ENCODE measurements at regions of chr11 and their contacts with region 1.

Region 1: DNA sequence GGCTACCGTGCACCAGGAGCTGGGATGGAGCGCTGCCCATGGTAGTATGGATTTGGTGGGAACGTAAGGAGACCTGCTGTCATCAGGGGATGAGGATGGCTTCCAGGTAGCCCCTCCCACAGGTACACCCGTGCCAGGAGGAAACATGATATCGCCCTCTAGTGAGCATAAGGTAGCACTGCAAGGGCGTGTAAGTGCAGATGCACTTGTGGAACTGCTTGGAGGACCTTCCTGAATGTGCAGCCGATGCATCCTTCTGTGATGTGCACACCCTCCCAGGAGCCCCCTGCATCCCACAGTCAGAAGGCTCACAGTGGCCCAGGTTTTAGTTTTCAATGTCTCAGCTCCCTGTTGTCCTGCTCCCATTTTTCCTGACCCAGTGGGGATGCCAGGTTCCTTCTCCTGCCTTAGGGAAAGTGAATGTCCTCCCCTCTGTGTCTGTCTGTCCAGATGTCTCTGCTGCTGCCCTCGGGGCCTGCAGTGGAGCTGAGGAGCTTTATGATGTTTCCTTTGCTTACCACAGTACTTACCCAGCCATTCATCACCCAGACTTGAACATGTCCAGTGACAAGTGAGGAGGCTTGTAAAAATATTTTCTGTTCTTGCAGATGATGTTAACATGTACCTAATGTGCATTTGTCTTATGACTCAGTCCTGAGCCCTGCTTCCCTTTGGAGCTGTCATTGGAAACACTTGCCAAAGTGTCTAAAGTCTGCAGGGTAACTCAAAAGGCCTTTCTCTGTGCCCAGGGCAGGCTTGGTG is 49.2 kb downstream of the DBX1 start:
- DNase-seq: peak; percentile 75 to 91 (median 87)
- ATAC-seq: peak; percentile 84
- H3K4me3 ChIP-seq: no peak overlapping the region
- H3K27ac ChIP-seq: no peak overlapping the region
- H3K4me1 ChIP-seq: peaks cover 12 to 14% of the 10 kb centered on the region in 2 experiments
- H3K27me3 ChIP-seq: no peaks in the 10 kb centered on the region
- CTCF ChIP-seq: peak; percentile 91 to 95 (median 92)
- EP300 ChIP-seq: no peak
- POLR2A ChIP-seq: no peak
- RAD21 ChIP-seq: peak; percentile 82 to 96

Region 2: DNA sequence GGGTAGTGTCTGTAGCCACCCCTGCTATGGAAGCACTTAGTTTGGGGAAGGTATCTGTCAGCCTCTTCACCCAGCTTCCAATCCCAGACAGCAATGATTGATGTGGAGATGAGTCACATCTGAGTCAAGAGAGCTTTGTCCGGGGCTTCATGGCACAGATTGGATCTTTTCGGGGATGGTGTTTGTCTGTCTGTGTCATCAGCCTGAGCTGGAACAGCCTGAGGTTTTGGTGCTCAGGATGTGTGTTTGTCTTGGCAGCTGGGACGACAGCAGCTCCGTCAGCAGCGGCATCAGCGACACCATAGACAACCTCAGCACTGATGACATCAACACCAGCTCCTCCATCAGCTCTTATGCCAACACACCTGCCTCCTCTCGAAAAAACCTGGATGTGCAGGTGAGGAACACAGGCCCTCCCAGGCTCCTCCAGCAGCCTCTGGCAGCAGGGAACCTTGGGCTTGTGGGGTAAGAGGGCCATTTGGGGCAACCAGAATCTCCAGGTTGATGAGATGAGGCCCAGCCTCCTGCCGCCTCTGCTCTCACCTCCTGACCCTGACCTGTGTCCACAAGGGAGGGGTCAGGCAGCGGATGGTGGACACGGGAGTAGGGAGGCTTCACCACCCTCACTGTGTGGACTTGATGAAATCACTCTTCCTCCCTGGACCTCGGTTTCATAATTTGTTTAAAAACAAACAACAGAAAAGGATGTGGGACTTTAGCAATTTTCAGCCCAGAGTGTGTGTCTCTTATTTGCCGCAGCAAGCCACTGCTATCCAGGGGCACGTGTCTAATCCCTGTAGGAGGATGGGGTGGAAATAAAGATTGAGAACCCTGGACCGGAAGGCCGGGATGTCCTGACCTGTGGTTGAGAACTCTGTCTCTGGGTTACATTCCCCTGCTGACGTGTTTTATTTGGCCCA is 75.1 kb before region 1 on chr11:
- CTCF ChIA-PET with region 1: no interaction called
- POLR2A ChIA-PET with region 1: no interaction called
- in situ Hi-C with region 1: no loop called
- intact Hi-C with region 1: loop called (anchors 5 kb)
- DNase-seq: peak in 3 of 4 experiments; percentile 15 to 54 (median 40)
- ATAC-seq: peak; percentile 66
- H3K4me3 ChIP-seq: no peak overlapping the region
- H3K27ac ChIP-seq: no peak overlapping the region
- H3K4me1 ChIP-seq: no peaks in the 10 kb centered on the region; a peak in 1 of 5 replicates
- H3K27me3 ChIP-seq: peaks cover 13 to 55% of the 10 kb centered on the region in 2 experiments
- CTCF ChIP-seq: no peak
- EP300 ChIP-seq: peak; percentile 57
- POLR2A ChIP-seq: no peak
- RAD21 ChIP-seq: no peak

Region 3: DNA sequence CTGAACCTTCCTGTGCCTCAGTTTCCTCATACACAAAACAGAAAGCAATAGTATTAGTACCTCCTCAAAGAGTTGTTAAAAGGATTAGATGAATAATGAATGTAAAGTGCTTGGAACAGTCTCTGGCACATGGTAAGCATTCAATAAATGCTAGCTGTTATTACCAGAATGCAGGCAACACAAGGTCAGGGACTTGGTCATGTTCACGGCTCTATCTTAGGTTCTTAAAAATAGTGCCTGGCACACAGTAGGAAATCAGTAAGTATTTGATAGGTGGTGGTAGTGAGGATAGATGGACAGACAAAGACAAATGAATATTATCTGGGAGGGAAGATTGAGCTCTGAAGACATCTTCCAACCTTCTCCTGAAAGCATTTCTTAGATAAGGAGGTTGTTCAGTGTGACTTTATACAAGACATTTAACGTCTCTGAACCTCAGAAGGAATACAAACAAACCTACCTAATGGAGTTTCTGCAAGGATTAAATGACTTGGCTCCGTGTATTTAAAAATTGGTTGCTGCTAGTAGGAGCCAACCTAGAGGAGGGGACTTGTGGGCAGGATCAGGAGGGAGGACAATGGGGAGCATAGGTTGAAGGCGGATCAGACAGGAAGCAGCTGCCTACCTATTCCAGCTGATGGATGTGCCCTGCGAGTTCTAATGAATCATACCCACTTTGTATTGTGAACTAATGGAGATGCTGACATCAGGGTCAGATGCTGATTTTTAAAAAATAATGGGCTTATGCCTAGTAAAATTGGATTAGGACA is 44.9 kb before region 1 on chr11:
- CTCF ChIA-PET with region 1: no interaction called
- POLR2A ChIA-PET with region 1: no interaction called
- in situ Hi-C with region 1: no loop called
- intact Hi-C with region 1: loop called (anchors 5 kb)
- DNase-seq: no peak
- ATAC-seq: no peak
- H3K4me3 ChIP-seq: peak overlapping the region; percentile 40
- H3K27ac ChIP-seq: no peak overlapping the region
- H3K4me1 ChIP-seq: peaks cover 0 to 12% of the 10 kb centered on the region in 2 experiments; a peak in 3 of 5 replicates
- H3K27me3 ChIP-seq: no peaks in the 10 kb centered on the region
- CTCF ChIP-seq: no peak
- EP300 ChIP-seq: no peak
- POLR2A ChIP-seq: no peak
- RAD21 ChIP-seq: no peak

Region 4: GRCh38 chr11:20080032-20080685 is 30.9 kb before region 1 on chr11:
- CTCF ChIA-PET with region 1: no interaction called
- POLR2A ChIA-PET with region 1: no interaction called
- in situ Hi-C with region 1: no loop called
- intact Hi-C with region 1: loop called (anchors 2 kb)
- DNase-seq: peak; percentile 36 to 86 (median 58)
- ATAC-seq: peak; percentile 90
- H3K4me3 ChIP-seq: peak overlapping the region; percentile 26
- H3K27ac ChIP-seq: peak overlapping the region; percentile 45
- H3K4me1 ChIP-seq: peaks cover 4 to 47% of the 10 kb centered on the region in 2 experiments; a peak in 4 of 5 replicates
- H3K27me3 ChIP-seq: no peaks in the 10 kb centered on the region
- CTCF ChIP-seq: no peak
- EP300 ChIP-seq: peak; percentile 93; the same call in 1 of the 2 replicates
- POLR2A ChIP-seq: no peak
- RAD21 ChIP-seq: 0 out of 4 replicates have a peak, but pooled peaks of 1 of the 2 experiments have one; percentile 6

Region 5: DNA sequence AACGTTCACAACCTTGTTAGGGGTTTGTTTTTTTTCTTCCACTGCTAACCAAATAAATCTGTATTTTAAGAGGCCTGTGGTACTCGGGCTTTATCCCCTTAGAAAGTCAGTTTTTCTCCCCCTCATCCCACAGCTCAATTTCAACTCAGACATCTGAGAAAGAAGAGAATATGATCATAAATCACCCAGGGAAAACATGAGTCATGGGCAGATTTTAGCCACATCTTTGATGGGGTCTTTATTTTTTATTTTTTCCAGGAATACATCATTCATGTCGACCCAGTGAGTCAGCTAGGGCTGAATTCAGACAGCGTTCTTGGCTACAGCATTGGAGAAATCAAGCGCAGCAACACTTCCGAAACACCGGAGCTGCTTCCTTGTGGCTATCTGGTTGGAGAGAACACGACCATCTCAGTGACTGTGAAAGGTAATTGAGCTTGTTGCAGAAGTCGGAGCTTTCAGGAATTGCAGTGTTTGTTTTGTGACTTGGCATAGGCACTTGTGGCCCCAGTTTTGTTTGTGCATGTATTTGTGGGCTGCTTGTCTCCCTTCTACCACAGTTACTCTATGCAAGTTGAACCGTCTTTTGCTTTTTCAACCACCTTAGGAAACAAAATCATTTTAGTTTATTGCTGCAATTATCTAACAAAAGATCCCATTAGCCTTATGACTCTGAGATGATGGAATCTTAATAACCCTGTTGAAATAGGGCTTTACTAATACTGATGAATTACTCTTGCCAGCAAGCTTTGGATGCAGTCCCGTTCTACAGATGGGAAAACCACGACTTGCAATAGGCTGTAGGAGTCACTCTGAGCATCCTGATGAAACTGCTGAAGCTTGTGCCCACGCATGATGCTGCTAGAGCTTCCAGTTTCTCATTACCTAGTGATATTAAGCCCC is 13.5 kb before region 1 on chr11:
- CTCF ChIA-PET with region 1: no interaction called
- POLR2A ChIA-PET with region 1: no interaction called
- in situ Hi-C with region 1: no loop called
- intact Hi-C with region 1: no loop called
- DNase-seq: peak in 2 of 4 experiments; percentile 30 to 51
- ATAC-seq: peak; percentile 26; the same call in 1 of the 3 replicates
- H3K4me3 ChIP-seq: no peak overlapping the region
- H3K27ac ChIP-seq: no peak overlapping the region
- H3K4me1 ChIP-seq: peaks cover 4 to 19% of the 10 kb centered on the region in 2 experiments; a peak in 3 of 5 replicates
- H3K27me3 ChIP-seq: no peaks in the 10 kb centered on the region; a peak in 1 of 5 replicates
- CTCF ChIP-seq: no peak
- EP300 ChIP-seq: peak; percentile 47; the same call in 1 of the 2 replicates
- POLR2A ChIP-seq: no peak
- RAD21 ChIP-seq: no peak

Measured in K562 (cell line).